Gastrocnemius medialis (tissue), 4 donors: ENCODE measurements at regions of chr11 and their contacts with region 1.

Region 1: DNA sequence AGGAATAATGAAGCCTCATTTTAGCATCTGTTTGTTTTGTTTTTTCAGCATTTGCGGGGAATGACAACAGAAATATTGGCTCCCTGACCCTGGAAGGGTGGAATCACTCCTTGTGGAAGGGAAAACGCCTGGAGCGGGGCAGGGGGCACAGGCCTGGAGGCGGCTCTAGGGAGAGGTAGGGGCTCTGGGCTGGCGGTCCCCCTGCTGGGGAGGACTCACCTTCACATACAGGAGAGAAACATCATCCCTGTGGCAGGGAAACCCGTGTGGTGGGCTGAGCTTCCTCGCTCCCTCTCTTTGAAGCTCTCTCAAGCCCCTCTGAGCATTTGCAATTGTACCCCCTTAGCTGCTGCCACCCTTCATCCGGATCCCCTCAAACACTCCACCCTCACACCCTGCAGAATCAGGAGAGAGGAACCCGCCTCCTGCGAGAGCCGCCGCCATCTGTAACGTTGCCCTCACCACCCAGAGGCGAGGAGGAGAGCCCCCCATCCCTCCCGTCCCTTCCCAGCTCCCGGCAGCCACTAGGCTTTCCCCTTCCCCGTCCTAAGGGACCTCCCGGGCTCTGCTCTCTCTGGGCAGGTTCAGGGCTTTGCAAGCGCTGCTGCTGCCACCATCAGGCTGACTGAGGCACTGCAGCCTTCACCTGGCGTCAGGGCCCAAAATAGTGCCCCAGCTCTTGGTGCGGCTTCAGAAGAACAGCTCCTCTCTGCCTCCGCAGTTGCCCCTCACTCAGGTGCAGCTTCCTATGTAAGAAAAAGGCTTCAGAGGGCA is 10.4 kb downstream of the KIRREL3 start:
- DNase-seq: peak in 1 of 2 donors; percentile 28
- ATAC-seq: peak; percentile 30 to 76
- H3K4me3 ChIP-seq: no peak overlapping the region
- H3K27ac ChIP-seq: no peak overlapping the region
- H3K4me1 ChIP-seq: no peaks in the 10 kb centered on the region
- H3K27me3 ChIP-seq: no peaks in the 10 kb centered on the region
- CTCF ChIP-seq: peak; percentile 34 to 83 (median 70)
- POLR2A ChIP-seq: no peak

Region 2: GRCh38 chr11:126310228-126310991 is 679.7 kb before region 1 on chr11:
- in situ Hi-C with region 1: no loop called
- intact Hi-C with region 1: loop called (anchors 10 kb)
- DNase-seq: peak; percentile 53 to 69
- ATAC-seq: peak; percentile 73 to 75
- H3K4me3 ChIP-seq: no peak overlapping the region
- H3K27ac ChIP-seq: peak overlapping the region in 3 of 4 donors; percentile 23 to 79 (median 43)
- H3K4me1 ChIP-seq: peaks cover 16 to 29% of the 10 kb centered on the region in 2 donors
- H3K27me3 ChIP-seq: no peaks in the 10 kb centered on the region
- CTCF ChIP-seq: peak; percentile 67 to 89 (median 80)
- POLR2A ChIP-seq: no peak

Region 3: GRCh38 chr11:126440792-126441514 is 549.2 kb before region 1 on chr11:
- in situ Hi-C with region 1: loop called (anchors 25 kb)
- intact Hi-C with region 1: loop called (anchors 5 kb)
- DNase-seq: peak; percentile 46 to 50
- ATAC-seq: peak; percentile 55 to 85
- H3K4me3 ChIP-seq: no peak overlapping the region
- H3K27ac ChIP-seq: no peak overlapping the region
- H3K4me1 ChIP-seq: no peaks in the 10 kb centered on the region
- H3K27me3 ChIP-seq: peaks cover 0 to 3% (median 0%) of the 10 kb centered on the region in 3 donors
- CTCF ChIP-seq: peak; percentile 91 to 96 (median 93)
- POLR2A ChIP-seq: no peak

Region 4: DNA sequence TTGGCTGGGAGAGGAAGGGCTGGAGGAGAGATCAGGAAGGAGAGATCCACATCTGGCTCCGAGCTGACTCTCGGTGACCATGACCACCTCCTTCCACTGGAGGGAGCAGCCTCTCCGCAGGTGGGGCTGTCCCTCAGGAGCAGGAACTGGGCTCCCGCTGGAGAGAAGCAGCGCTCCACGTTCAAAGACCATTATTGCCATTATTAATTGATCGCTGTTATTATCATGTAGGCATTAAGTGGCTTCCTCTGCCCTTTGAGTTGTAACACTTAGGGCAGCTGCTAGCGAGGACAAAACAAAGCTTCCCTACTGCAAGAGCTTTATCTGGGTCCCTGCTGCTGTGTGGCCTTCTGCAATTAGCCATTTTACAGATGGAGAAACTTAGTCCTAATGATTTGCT is 382.8 kb before region 1 on chr11:
- in situ Hi-C with region 1: loop called in 1 of 4 experiments (anchors 25 kb)
- intact Hi-C with region 1: loop called (anchors 10 kb)
- DNase-seq: no peak
- ATAC-seq: peak in 1 of 2 donors; percentile 30
- H3K4me3 ChIP-seq: no peak overlapping the region
- H3K27ac ChIP-seq: no peak overlapping the region
- H3K4me1 ChIP-seq: no peaks in the 10 kb centered on the region
- H3K27me3 ChIP-seq: no peaks in the 10 kb centered on the region
- CTCF ChIP-seq: peak in 3 of 5 experiments; percentile 26 to 49 (median 48)
- POLR2A ChIP-seq: no peak

Region 5: GRCh38 chr11:126655807-126656128 is 334.4 kb before region 1 on chr11:
- in situ Hi-C with region 1: no loop called
- intact Hi-C with region 1: no loop called
- DNase-seq: no peak
- ATAC-seq: no peak
- H3K4me3 ChIP-seq: no peak overlapping the region
- H3K27ac ChIP-seq: no peak overlapping the region
- H3K4me1 ChIP-seq: no peaks in the 10 kb centered on the region
- H3K27me3 ChIP-seq: no peaks in the 10 kb centered on the region
- CTCF ChIP-seq: no peak
- POLR2A ChIP-seq: no peak

Region 6: DNA sequence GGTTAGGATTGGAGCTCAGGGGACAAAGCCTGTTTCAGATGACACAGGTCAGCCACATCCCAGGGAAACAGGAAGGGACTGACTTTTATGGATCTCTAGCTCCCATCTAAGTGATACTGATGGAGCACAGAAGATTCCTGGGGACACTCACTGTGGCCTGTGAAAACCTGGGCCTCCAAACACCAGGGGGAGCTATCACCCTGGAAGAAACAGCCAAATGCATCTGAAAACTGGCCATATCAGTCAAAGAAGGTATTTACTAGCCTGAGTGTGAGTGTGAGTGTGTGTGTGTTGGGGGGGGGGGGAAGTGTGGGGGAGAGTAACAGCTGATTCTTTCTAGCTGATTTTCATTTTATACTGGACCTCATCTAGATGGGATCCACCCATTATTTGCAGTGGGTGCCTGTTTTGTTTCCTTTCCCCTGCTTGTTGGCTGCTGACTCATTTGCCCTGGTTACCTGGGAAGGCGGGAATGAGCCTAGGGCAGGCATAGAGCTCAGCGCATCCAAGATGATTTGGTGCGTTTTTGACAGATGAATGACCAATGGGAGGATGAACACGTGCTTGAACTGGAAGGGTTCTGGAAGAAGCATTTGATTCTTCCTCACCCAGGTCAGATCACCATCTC is 273.6 kb before region 1 on chr11:
- in situ Hi-C with region 1: loop called in 1 of 4 experiments (anchors 10 kb)
- intact Hi-C with region 1: loop called (anchors 2 kb)
- DNase-seq: no peak
- ATAC-seq: no peak
- H3K4me3 ChIP-seq: no peak overlapping the region
- H3K27ac ChIP-seq: no peak overlapping the region
- H3K4me1 ChIP-seq: no peaks in the 10 kb centered on the region
- H3K27me3 ChIP-seq: no peaks in the 10 kb centered on the region
- CTCF ChIP-seq: peak in 1 of 5 experiments; percentile 34
- POLR2A ChIP-seq: no peak

Region 7: DNA sequence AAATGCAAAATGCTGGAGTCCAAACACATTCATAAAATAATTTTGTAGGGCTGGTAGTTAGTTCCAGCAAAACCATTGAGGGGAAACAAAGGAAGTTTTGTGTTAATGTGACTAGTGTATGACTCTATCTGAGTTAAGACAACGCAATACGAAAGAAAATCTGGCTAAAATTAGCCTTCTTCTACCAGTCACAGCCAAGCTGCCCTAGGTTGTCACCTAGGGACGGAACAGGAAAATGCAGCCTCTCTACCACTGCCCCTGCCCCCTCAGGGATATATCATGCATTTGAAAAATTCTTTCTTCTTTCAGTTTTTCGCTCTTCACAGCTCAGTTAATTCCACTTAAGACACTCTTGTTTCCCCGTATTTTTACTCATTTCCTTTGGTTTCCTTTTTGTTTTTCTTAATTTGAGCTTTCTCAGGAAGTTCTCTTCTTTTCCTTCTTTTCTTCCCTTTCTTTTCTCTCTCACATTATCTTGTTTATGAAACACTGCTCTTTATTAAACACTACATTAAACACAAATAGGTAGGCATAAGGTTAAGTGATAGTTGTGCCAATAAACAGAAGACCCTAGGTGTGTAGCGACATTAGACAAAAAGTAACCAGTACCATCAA is 20.2 kb before region 1 on chr11:
- in situ Hi-C with region 1: no loop called
- intact Hi-C with region 1: no loop called
- DNase-seq: no peak
- ATAC-seq: no peak
- H3K4me3 ChIP-seq: no peak overlapping the region
- H3K27ac ChIP-seq: no peak overlapping the region
- H3K4me1 ChIP-seq: no peaks in the 10 kb centered on the region
- H3K27me3 ChIP-seq: peaks cover 0 to 21% (median 7%) of the 10 kb centered on the region in 3 donors
- CTCF ChIP-seq: peak in 1 of 5 experiments; percentile 15
- POLR2A ChIP-seq: no peak